ENCODE measurements at regions of chr2 and their contacts with region 1.

Region 1: DNA sequence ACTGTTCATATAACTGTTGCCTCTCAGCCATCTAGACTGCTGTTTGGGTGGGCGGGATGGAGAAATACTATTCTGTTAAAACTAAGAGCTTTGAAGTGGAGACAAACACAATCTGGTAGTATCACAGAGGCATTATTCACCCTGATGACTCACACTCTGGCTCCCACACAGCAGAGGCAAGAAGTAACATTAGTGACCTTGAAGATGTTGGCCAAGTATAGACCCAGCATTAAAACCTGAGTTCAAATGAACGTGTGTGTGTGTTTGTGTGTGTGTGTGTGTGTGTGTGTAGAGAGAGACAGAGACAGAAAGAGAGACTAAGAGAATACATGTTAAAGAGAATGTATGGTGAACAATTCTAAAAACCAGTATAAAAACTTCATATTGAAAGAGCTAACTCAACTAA is 22.5 kb upstream of the ACVR1 start:
- DNase-seq: peak; percentile 43
- H3K4me3 Mint-ChIP-seq: peak overlapping the region; percentile 82
- H3K27ac Mint-ChIP-seq: peak overlapping the region; percentile 97
- H3K4me1 Mint-ChIP-seq: peaks cover 79% of the 10 kb centered on the region
- H3K27me3 Mint-ChIP-seq: no peaks in the 10 kb centered on the region

Region 2: GRCh38 chr2:157261199-157261783 is 637.3 kb before region 1 on chr2:
- intact Hi-C with region 1: loop called (anchors 1 kb)
- DNase-seq: peak; percentile 12
- H3K4me3 Mint-ChIP-seq: peak overlapping the region; percentile 57
- H3K27ac Mint-ChIP-seq: peak overlapping the region; percentile 86
- H3K4me1 Mint-ChIP-seq: peaks cover 37% of the 10 kb centered on the region
- H3K27me3 Mint-ChIP-seq: peaks cover 2% of the 10 kb centered on the region

Region 3: GRCh38 chr2:157420771-157421323 is 477.7 kb before region 1 on chr2:
- intact Hi-C with region 1: loop called (anchors 2 kb)
- DNase-seq: no peak
- H3K4me3 Mint-ChIP-seq: peak overlapping the region; percentile 69
- H3K27ac Mint-ChIP-seq: peak overlapping the region; percentile 91
- H3K4me1 Mint-ChIP-seq: peaks cover 84% of the 10 kb centered on the region
- H3K27me3 Mint-ChIP-seq: no peaks in the 10 kb centered on the region

Region 4: GRCh38 chr2:157628477-157629415 is 269.8 kb before region 1 on chr2 and contains the start of gene ACVR1C:
- intact Hi-C with region 1: loop called (anchors 1 kb)
- DNase-seq: peak; percentile 63
- H3K4me3 Mint-ChIP-seq: peak within 1 kb of the TSS; percentile 88
- H3K27ac Mint-ChIP-seq: peak within 1 kb of the TSS; percentile 55
- H3K4me1 Mint-ChIP-seq: peaks cover 28% of the 10 kb centered on the region
- H3K27me3 Mint-ChIP-seq: peaks cover 15% of the 10 kb centered on the region
- total RNA-seq, gene ACVR1C: 0.59 and 1.1 TPM in 2 replicates

Region 5: DNA sequence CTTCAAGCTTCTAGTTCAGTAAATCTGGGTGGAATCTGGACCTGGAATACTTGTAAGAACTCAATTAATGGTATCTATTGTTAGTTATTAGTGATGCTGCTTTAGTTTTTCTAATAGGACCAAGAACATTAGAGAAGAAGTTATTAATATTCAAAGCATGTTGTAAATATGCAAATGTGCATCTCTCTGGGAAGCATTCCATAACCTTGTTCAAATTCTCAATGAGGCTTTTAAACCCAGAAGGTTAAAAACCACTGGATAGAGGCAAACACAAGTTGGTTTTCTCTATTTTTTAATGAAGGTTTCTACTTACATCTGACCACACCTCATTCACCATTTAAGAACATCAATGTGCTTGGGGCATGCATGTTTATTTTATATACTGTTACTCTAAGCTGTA is 253.8 kb before region 1 on chr2:
- intact Hi-C with region 1: no loop called
- DNase-seq: no peak
- H3K4me3 Mint-ChIP-seq: no peak overlapping the region
- H3K27ac Mint-ChIP-seq: no peak overlapping the region
- H3K4me1 Mint-ChIP-seq: no peaks in the 10 kb centered on the region
- H3K27me3 Mint-ChIP-seq: no peaks in the 10 kb centered on the region

Region 6: DNA sequence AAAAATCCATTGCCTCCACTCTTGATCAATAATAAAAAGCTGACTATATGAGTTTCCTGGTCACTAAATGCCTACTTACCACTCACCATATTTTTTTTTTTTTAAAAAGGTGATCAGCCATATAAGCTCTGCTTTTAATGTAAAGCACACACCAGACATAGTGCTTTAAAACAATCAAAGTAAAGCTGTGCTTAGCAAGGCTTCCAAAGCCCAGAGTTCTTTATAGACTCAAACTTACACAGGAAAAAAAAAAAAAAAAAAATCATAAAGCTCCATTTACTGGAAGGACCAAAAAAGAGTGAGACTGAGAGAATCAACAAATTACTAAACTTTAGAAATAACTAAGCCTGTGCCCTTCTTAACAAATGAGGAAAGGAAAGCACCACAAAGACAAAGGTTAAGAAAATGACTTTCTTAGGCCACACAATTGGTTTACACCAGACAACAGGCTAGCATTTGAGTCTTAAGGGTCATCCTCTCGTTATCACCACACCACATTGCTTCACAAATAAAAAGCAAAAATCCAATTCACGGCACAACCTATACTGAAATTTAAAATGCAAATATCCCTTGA is 33.6 kb before region 1 on chr2:
- intact Hi-C with region 1: loop called (anchors 1 kb)
- DNase-seq: no peak
- H3K4me3 Mint-ChIP-seq: peak overlapping the region; percentile 32
- H3K27ac Mint-ChIP-seq: peak overlapping the region; percentile 88
- H3K4me1 Mint-ChIP-seq: peaks cover 54% of the 10 kb centered on the region
- H3K27me3 Mint-ChIP-seq: no peaks in the 10 kb centered on the region

Region 7: GRCh38 chr2:158456309-158457066 is 557.9 kb after region 1 on chr2 and contains the starts of genes CCDC148 and PKP4:
- intact Hi-C with region 1: loop called (anchors 5 kb)
- DNase-seq: peak; percentile 87
- H3K4me3 Mint-ChIP-seq: peak within 1 kb of the TSS; percentile 98
- H3K27ac Mint-ChIP-seq: peak within 1 kb of the TSS; percentile 92
- H3K4me1 Mint-ChIP-seq: peaks cover 23% of the 10 kb centered on the region
- H3K27me3 Mint-ChIP-seq: peaks cover 29% of the 10 kb centered on the region
- total RNA-seq, gene CCDC148: 0.36 TPM in 1 of 2 replicates, not detected in the other
- total RNA-seq, gene PKP4: 28.4 and 30.3 TPM in 2 replicates